Activated T-helper 2 cell treated with anti-CD3 and anti-CD28 coated beads, Interferon-gamma antibody, Interleukin-2, Interleukin-4, amounts not matched to agents 10 μg/mL and 5 μg/mL and 100 μg/mL, durations not matched to agents 14 hours and 24 hours and 36 hours (primary cell): ENCODE measurements at regions of chr2 and their contacts with region 1.

Region 1: DNA sequence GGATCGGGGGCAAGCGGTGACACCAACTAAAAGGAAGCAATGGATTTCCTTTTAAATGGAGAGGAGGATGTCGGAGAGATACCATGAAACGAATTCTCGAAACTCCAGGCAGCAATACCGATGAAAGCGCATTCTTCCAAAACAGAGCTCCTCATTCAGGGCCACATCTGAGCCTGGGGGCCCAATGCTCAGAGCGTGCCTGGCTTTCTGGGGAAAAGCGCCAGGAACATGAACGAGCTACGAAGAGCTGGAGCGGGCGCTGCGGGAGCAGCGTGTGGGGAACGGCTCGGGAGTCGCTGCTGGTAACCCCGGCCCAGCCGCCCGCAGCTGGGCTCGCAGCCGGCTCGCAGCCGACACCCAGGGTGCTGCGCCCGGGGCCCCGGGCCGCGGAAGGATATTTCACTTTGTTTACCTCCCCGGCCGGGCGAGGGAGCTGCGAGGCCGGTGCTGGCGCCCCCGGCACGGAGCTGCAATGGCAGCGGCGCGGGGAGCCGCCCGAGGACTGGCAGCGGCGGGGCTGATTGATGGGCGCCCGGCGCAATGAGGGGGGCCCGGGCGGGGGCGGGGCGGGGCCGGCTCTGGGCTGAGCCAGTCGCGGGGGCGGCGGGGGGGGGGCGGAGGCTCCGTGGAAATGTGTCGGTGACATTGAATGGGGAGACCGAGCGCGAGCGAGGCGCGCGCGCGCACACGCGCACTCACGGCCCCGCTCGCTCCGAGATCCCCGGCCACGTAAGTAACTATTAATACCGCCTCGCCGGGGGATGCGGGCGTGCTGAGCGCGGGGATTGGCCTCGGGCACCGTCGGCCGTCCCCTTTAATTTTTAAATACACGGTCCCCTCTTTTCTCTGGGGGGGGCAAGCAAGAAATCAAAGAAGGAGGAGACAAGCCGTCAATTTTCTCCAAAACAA is at the start of gene TRIB2:
- DNase-seq: peak; percentile 83
- H3K4me3 Mint-ChIP-seq: peak within 1 kb of the TSS; percentile 97
- H3K27ac Mint-ChIP-seq: peak within 1 kb of the TSS; percentile 78
- H3K4me1 Mint-ChIP-seq: peaks cover 45% of the 10 kb centered on the region
- H3K27me3 Mint-ChIP-seq: peaks cover 17% of the 10 kb centered on the region
- total RNA-seq, gene TRIB2: 3.9 TPM in 2 replicates

Region 2: DNA sequence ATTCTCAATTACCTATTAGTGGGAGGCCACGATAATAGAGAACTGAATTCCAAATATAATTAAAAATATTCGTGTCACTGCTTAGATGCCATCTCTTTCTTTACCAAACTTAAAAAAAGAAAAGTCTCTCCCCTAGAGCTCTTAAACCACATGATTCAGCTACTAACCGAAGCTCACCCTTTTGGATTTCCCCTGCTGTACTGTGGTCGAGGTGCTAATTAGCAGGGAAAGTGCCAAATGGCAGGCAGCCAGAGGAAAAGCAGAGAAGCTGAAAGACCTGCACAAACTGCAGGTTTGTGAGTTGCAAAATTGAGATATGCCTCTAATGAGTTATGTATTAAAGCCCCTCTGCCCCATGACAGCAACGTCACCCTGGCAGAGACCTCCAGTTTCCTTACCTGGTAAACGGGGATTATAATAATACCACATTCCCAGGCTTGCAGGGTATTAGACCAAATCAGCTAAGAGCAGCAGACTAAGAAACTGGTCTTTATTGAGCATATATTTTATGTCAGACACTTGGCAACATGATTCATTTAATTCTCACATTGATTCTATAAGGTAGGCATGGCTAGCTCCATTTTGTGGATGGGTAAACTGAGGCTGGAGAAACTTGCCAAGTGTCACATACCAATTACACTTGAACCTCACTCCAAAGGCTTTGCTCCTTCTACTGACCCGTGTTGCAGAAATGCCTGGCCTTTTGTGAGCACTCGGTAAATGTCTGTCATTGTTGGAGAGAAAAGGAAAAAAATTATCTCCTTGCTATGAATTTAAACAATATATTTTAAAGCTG is 710.5 kb before region 1 on chr2:
- intact Hi-C with region 1: loop called (anchors 5 kb)
- DNase-seq: peak; percentile 24
- H3K4me3 Mint-ChIP-seq: no peak overlapping the region
- H3K27ac Mint-ChIP-seq: no peak overlapping the region
- H3K4me1 Mint-ChIP-seq: peaks cover 10% of the 10 kb centered on the region
- H3K27me3 Mint-ChIP-seq: peaks cover 40% of the 10 kb centered on the region

Region 3: GRCh38 chr2:12430407-12431133 is 286.0 kb before region 1 on chr2:
- intact Hi-C with region 1: loop called (anchors 2 kb)
- DNase-seq: no peak
- H3K4me3 Mint-ChIP-seq: peak overlapping the region; percentile 18
- H3K27ac Mint-ChIP-seq: peak overlapping the region; percentile 63
- H3K4me1 Mint-ChIP-seq: peaks cover 29% of the 10 kb centered on the region
- H3K27me3 Mint-ChIP-seq: no peaks in the 10 kb centered on the region

Region 4: GRCh38 chr2:12636837-12637581 is 79.5 kb before region 1 on chr2:
- intact Hi-C with region 1: loop called (anchors 5 kb)
- DNase-seq: no peak
- H3K4me3 Mint-ChIP-seq: no peak overlapping the region
- H3K27ac Mint-ChIP-seq: no peak overlapping the region
- H3K4me1 Mint-ChIP-seq: peaks cover 38% of the 10 kb centered on the region
- H3K27me3 Mint-ChIP-seq: no peaks in the 10 kb centered on the region

Region 5: GRCh38 chr2:12867631-12868287 is 151.2 kb after region 1 on chr2:
- intact Hi-C with region 1: no loop called
- DNase-seq: no peak
- H3K4me3 Mint-ChIP-seq: no peak overlapping the region
- H3K27ac Mint-ChIP-seq: no peak overlapping the region
- H3K4me1 Mint-ChIP-seq: no peaks in the 10 kb centered on the region
- H3K27me3 Mint-ChIP-seq: peaks cover 36% of the 10 kb centered on the region

Region 6: GRCh38 chr2:12965540-12966269 is 249.2 kb after region 1 on chr2:
- intact Hi-C with region 1: loop called (anchors 5 kb)
- DNase-seq: no peak
- H3K4me3 Mint-ChIP-seq: peak overlapping the region; percentile 2
- H3K27ac Mint-ChIP-seq: peak overlapping the region; percentile 48
- H3K4me1 Mint-ChIP-seq: peaks cover 49% of the 10 kb centered on the region
- H3K27me3 Mint-ChIP-seq: peaks cover 11% of the 10 kb centered on the region